Heart left ventricle (tissue), 16 donors: ENCODE measurements at regions of chr19 and their contacts with region 1.

Region 1: DNA sequence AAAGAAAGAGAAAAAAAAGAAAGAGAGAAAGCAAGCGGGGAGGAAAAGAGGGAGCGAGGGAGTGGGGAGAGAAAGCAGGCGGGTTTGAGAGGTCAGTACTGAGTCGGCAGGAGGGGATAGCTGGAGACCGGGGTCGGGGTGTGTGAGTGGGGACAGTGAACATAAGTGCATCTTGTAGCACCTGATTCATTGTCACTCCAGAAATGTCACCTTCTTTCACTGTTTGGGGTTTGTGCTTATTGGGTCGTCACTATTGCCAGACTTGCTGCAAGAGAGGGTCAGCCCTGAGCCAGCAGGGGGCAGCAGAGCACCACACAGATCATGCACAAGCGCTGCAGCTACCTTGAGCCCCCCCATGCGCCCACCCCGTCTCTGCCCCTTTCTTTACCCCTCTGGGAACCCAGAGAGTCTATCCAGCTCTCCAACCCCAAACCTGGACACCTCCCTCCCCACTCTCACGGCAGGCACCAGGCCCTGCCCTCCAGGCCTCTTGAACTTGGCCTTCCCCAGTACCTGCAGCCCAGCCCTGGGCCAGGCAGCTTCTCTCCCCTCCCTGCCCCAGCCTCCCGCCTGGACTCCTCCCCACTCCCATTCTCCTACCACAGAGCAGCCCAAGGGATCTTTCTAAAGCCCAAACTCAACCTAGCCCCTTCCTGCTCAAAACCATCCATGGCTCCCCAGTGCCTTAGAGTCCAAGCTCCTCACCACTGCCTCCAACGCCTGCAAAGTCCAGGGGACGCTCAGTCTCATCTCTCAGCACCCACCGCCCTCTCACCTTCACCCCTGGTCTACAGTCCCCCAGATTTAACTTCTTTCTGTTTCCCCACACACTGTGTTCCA is 9.7 kb upstream of the CEACAM16 start:
- DNase-seq: peak; percentile 67 to 87 (median 75)
- ATAC-seq: peak; percentile 21 to 63 (median 46)
- H3K4me3 ChIP-seq: no peak overlapping the region
- H3K27ac ChIP-seq: peak overlapping the region in 1 of 12 donors; percentile 29
- H3K4me1 ChIP-seq: peaks cover 0 to 65% (median 22%) of the 10 kb centered on the region in 12 donors
- H3K27me3 ChIP-seq: no peaks in the 10 kb centered on the region
- CTCF ChIP-seq: peak; percentile 90 to 96 (median 94)
- POLR2A ChIP-seq: no peak

Region 2: GRCh38 chr19:44764975-44765948 is 76.0 kb after region 1 on chr19:
- intact Hi-C with region 1: loop called in 9 of 10 experiments (anchors 1 to 5 kb)
- DNase-seq: peak in 2 of 5 donors; percentile 37 to 64
- ATAC-seq: peak in 1 of 4 donors; percentile 38
- H3K4me3 ChIP-seq: no peak overlapping the region
- H3K27ac ChIP-seq: peak overlapping the region in 1 of 12 donors; percentile 62
- H3K4me1 ChIP-seq: peaks cover 0 to 56% (median 0%) of the 10 kb centered on the region in 12 donors
- H3K27me3 ChIP-seq: no peaks in the 10 kb centered on the region
- CTCF ChIP-seq: no peak
- POLR2A ChIP-seq: no peak

Region 3: GRCh38 chr19:44770550-44771257 is 81.4 kb after region 1 on chr19:
- intact Hi-C with region 1: loop called (anchors 1 to 5 kb)
- DNase-seq: peak; percentile 89 to 95 (median 94)
- ATAC-seq: peak; percentile 96 to 99 (median 99)
- H3K4me3 ChIP-seq: peak overlapping the region in 1 of 12 donors; percentile 9
- H3K27ac ChIP-seq: peak overlapping the region in 1 of 12 donors; percentile 50
- H3K4me1 ChIP-seq: peaks cover 0 to 37% (median 1%) of the 10 kb centered on the region in 12 donors
- H3K27me3 ChIP-seq: no peaks in the 10 kb centered on the region
- CTCF ChIP-seq: peak in 11 of 12 donors; percentile 81 to 91 (median 87)
- POLR2A ChIP-seq: no peak